ENCODE measurements at regions of chr1 and their contacts with region 1.

Region 1: DNA sequence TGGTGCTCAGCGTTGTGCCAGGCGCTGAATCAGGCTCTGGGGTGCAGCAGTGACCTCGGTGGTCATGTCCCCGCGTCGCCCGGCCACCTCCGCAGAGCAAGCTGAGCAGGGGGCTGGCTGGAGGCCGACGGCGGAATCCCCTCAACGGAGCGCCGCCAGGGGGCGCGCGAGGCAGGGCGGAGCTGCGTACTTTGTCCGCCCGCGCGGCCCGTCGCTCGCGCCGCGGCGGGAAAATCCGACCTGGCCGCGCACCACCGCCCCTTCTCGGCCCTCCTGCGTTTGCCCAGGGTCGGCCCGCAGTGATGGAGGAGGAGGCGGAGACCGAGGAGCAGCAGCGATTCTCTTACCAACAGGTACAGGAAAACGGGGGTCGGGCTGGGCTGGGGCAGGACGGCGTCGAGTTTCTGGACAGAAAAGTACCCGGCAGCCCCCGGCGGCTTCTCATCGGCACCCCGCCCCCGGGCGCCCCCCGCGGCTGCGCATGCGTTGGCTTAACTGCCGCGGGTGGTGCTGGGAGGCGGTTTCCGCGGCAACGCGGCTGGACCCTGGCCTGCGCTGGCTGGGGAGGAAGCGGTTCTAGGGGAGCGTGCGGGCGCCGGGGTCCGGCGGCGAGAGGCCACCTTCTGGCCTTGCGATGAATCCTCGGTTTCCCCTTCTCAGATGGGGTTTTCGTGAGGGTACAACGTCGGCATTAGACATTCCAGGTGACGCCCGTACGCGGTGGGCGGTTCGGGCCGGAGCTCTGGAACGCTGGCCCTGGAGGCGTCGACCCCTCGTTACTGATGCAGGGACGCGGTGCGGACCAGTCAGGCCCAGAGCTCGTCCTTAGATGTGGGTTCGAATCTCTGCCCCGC is at the start of gene CENPS:
- DNase-seq: peak; percentile 51
- ATAC-seq: peak; percentile 89
- H3K4me3 ChIP-seq: peak within 1 kb of the TSS; percentile 93
- H3K27ac ChIP-seq: peak within 1 kb of the TSS; percentile 80
- H3K4me1 ChIP-seq: peaks cover 24% of the 10 kb centered on the region
- H3K27me3 ChIP-seq: no peaks in the 10 kb centered on the region
- CTCF ChIP-seq: peak; percentile 87 to 98 (median 93); a peak in 5 of 6 replicates
- EP300 ChIP-seq: no peak
- POLR2A ChIP-seq: peak; percentile 74
- RAD21 ChIP-seq: peak; percentile 51
- polyA plus RNA-seq, gene CENPS: 10.9 to 17.5 TPM

Region 2: DNA sequence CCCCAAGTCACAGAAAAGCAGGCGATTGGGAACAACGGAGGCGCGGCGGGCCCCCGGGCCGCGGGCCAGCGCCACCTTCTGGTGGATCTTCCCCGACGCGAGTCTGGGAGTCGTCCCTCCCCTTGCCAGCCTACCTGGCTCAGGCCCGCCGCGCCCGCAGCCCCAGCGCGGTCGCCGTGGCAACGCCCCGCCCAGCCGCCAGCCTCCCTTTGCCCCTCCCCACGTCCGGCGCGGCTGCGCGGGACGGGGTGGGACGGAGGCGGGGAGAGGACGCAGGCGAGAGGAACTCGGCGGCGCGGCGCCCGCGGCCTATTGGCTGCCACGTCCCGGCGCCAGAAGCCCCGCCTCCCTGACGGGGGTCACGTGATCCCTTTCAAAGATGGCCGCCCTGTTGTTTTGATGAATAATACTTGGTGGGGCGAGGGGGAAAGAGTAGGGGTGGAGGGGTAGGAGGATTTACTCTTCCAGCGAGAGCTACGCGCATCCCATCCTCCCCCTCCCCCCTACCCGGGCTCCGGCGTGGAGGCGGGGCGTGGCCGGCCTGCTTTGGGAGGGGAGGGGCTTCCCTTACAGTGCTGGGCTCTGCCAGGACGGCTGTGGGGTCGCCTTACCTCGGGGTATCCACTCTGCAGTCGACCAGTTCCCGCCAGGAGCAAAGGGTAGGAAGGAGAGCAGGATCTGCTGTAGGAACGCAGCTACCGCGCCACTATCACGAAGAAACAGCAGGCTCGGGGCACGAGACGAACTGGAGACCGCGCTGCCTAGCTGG is 397.7 kb before region 1 on chr1 and contains the start of gene UBE4B:
- CTCF ChIA-PET with region 1: no interaction called
- POLR2A ChIA-PET with region 1: no interaction called
- RAD21 ChIA-PET with region 1: no interaction called
- SMC1A ChIA-PET with region 1: no interaction called
- in situ Hi-C with region 1: no loop called
- intact Hi-C with region 1: loop called (anchors 1 kb)
- DNase-seq: peak; percentile 83
- ATAC-seq: peak; percentile 98
- H3K4me3 ChIP-seq: peak within 1 kb of the TSS; percentile 99
- H3K27ac ChIP-seq: peak within 1 kb of the TSS; percentile 79
- H3K4me1 ChIP-seq: no peaks in the 10 kb centered on the region
- H3K27me3 ChIP-seq: no peaks in the 10 kb centered on the region
- CTCF ChIP-seq: peak; percentile 78 to 97 (median 90); a peak in 5 of 6 replicates
- EP300 ChIP-seq: peak in 1 of 2 experiments; percentile 23; a peak in 1 of 4 replicates
- POLR2A ChIP-seq: peak; percentile 62; the same call in 1 of the 2 replicates
- RAD21 ChIP-seq: peak; percentile 63
- polyA plus RNA-seq, gene UBE4B: 2.9 to 7.4 TPM

Region 3: GRCh38 chr1:10236405-10237156 is 193.9 kb before region 1 on chr1:
- CTCF ChIA-PET with region 1: no interaction called
- POLR2A ChIA-PET with region 1: no interaction called
- RAD21 ChIA-PET with region 1: no interaction called
- SMC1A ChIA-PET with region 1: no interaction called
- in situ Hi-C with region 1: no loop called
- intact Hi-C with region 1: no loop called
- DNase-seq: no peak
- ATAC-seq: peak; percentile 77
- H3K4me3 ChIP-seq: no peak overlapping the region
- H3K27ac ChIP-seq: peak overlapping the region; percentile 32; the same call in 1 of the 2 replicates
- H3K4me1 ChIP-seq: peaks cover 16% of the 10 kb centered on the region
- H3K27me3 ChIP-seq: no peaks in the 10 kb centered on the region
- CTCF ChIP-seq: no peak
- EP300 ChIP-seq: no peak
- POLR2A ChIP-seq: no peak
- RAD21 ChIP-seq: no peak

Region 4: GRCh38 chr1:10378081-10378841 is 52.2 kb before region 1 on chr1:
- CTCF ChIA-PET with region 1: interaction called, 12 read pairs
- POLR2A ChIA-PET with region 1: no interaction called
- RAD21 ChIA-PET with region 1: interaction called, 11 read pairs
- SMC1A ChIA-PET with region 1: interaction called, 7 read pairs
- in situ Hi-C with region 1: no loop called
- intact Hi-C with region 1: loop called (anchors 1 kb)
- DNase-seq: no peak
- ATAC-seq: no peak; the same call in 2 of the 3 replicates
- H3K4me3 ChIP-seq: no peak overlapping the region
- H3K27ac ChIP-seq: no peak overlapping the region
- H3K4me1 ChIP-seq: peaks cover 6% of the 10 kb centered on the region
- H3K27me3 ChIP-seq: no peaks in the 10 kb centered on the region
- CTCF ChIP-seq: no peak
- EP300 ChIP-seq: no peak
- POLR2A ChIP-seq: no peak
- RAD21 ChIP-seq: no peak

Region 5: DNA sequence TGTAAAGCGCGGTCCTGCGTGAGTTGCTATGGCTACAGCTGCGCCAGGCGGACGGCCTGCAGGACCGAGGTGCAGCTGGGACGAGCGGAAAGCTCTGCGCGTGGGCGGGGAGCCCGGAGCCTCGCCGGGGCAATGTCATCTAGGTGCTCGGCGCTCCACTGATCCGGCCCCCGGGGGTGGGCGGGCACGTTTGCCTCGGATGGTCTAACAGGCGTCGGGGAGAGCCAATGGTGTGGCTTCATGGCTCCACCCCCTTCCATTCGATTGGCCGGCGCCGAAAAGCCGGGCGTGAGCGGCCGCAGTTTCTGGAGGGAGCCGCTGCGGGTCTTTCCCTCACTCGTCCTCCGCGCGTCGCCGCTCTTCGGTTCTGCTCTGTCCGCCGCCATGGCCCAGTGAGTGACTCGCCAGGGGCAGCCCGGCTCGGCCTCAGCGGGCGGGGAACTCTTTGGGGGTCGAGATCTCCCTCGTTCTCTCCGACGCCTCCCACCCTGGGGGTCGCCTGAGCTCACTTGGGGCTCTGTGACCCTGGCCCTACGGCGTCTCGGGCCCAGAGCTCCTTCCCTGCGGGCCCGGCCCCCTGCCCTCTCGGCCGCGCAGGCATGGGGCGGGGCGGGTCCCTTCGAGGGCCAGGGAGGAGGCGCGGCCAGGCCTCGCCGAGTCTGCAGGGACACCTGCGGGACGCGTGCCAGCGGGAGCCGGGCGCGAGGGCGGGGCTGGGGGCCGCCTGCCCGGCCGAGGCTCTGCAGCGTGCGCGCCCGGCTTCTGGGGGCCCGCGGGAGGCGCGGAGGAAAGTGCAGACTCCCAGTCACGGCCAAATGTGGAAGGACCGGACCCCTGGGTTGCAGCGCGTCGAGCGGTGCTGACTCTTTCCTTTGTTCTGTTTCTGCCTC is 31.5 kb before region 1 on chr1 and contains the start of gene PGD:
- CTCF ChIA-PET with region 1: interaction called, 14 read pairs
- POLR2A ChIA-PET with region 1: interaction called, 4 read pairs
- RAD21 ChIA-PET with region 1: no interaction called
- SMC1A ChIA-PET with region 1: interaction called, 6 read pairs
- in situ Hi-C with region 1: no loop called
- intact Hi-C with region 1: no loop called
- DNase-seq: peak; percentile 89
- ATAC-seq: peak; percentile 97
- H3K4me3 ChIP-seq: peak within 1 kb of the TSS; percentile 88
- H3K27ac ChIP-seq: peak within 1 kb of the TSS; percentile 75
- H3K4me1 ChIP-seq: peaks cover 6% of the 10 kb centered on the region
- H3K27me3 ChIP-seq: no peaks in the 10 kb centered on the region
- CTCF ChIP-seq: no peak
- EP300 ChIP-seq: 0 out of 4 replicates have a peak, but pooled peaks of 1 of the 2 experiments have one; percentile 22
- POLR2A ChIP-seq: peak; percentile 95
- RAD21 ChIP-seq: no peak
- polyA plus RNA-seq, gene PGD: 152 to 190 TPM

Region 6: GRCh38 chr1:10472220-10473144 is 42.0 kb after region 1 on chr1 and contains the start of gene DFFA:
- CTCF ChIA-PET with region 1: interaction called, 7 read pairs
- POLR2A ChIA-PET with region 1: interaction called, 10 read pairs
- RAD21 ChIA-PET with region 1: interaction called, 10 read pairs
- SMC1A ChIA-PET with region 1: interaction called, 4 read pairs
- in situ Hi-C with region 1: no loop called
- intact Hi-C with region 1: loop called (anchors 1 kb)
- DNase-seq: peak; percentile 95
- ATAC-seq: peak; percentile 86
- H3K4me3 ChIP-seq: peak within 1 kb of the TSS; percentile 79
- H3K27ac ChIP-seq: peak within 1 kb of the TSS; percentile 70
- H3K4me1 ChIP-seq: peaks cover 18% of the 10 kb centered on the region
- H3K27me3 ChIP-seq: no peaks in the 10 kb centered on the region
- CTCF ChIP-seq: no peak
- EP300 ChIP-seq: no peak
- POLR2A ChIP-seq: peak; percentile 91
- RAD21 ChIP-seq: no peak
- polyA plus RNA-seq, gene DFFA: 55.6 to 57.3 TPM

Region 7: GRCh38 chr1:10615332-10615731 is 184.9 kb after region 1 on chr1:
- CTCF ChIA-PET with region 1: no interaction called
- POLR2A ChIA-PET with region 1: no interaction called
- RAD21 ChIA-PET with region 1: no interaction called
- SMC1A ChIA-PET with region 1: no interaction called
- in situ Hi-C with region 1: no loop called
- intact Hi-C with region 1: no loop called
- DNase-seq: no peak
- ATAC-seq: no peak
- H3K4me3 ChIP-seq: no peak overlapping the region
- H3K27ac ChIP-seq: no peak overlapping the region
- H3K4me1 ChIP-seq: no peaks in the 10 kb centered on the region
- H3K27me3 ChIP-seq: no peaks in the 10 kb centered on the region
- CTCF ChIP-seq: no peak
- EP300 ChIP-seq: no peak
- POLR2A ChIP-seq: no peak
- RAD21 ChIP-seq: no peak

Region 8: GRCh38 chr1:10867138-10867721 is 436.8 kb after region 1 on chr1:
- CTCF ChIA-PET with region 1: interaction called, 3 read pairs
- POLR2A ChIA-PET with region 1: no interaction called
- RAD21 ChIA-PET with region 1: no interaction called
- SMC1A ChIA-PET with region 1: no interaction called
- in situ Hi-C with region 1: loop called (anchors 10 kb)
- intact Hi-C with region 1: no loop called
- DNase-seq: no peak
- ATAC-seq: peak; percentile 96
- H3K4me3 ChIP-seq: peak overlapping the region; percentile 20; the same call in 1 of the 2 replicates
- H3K27ac ChIP-seq: no peak overlapping the region
- H3K4me1 ChIP-seq: 0 out of 2 replicates have a peak, but pooled peaks cover 5% of the 10 kb centered on the region
- H3K27me3 ChIP-seq: peaks cover 2 to 6% of the 10 kb centered on the region in 2 experiments; a peak in 3 of 4 replicates
- CTCF ChIP-seq: peak; percentile 41 to 68 (median 51); a peak in 5 of 6 replicates
- EP300 ChIP-seq: no peak
- POLR2A ChIP-seq: no peak
- RAD21 ChIP-seq: peak; percentile 67

Measured in GM12878 (cell line).